ENCODE measurements at regions of chr10 and their contacts with region 1.

Region 1: GRCh38 chr10:11493646-11494045 is 117.8 kb downstream of the USP6NL start:
- DNase-seq: no peak
- ATAC-seq: no peak
- H3K4me3 ChIP-seq: no peak overlapping the region
- H3K27ac ChIP-seq: no peak overlapping the region
- H3K4me1 ChIP-seq: no peaks in the 10 kb centered on the region
- CTCF ChIP-seq: no peak
- EP300 ChIP-seq: no peak
- POLR2A ChIP-seq: no peak
- RAD21 ChIP-seq: no peak

Region 2: GRCh38 chr10:11483201-11484148 is 10.2 kb before region 1 on chr10:
- CTCF ChIA-PET with region 1: interaction called, 15 read pairs
- POLR2A ChIA-PET with region 1: no interaction called
- DNase-seq: no peak
- ATAC-seq: no peak
- H3K4me3 ChIP-seq: no peak overlapping the region
- H3K27ac ChIP-seq: no peak overlapping the region
- H3K4me1 ChIP-seq: no peaks in the 10 kb centered on the region
- CTCF ChIP-seq: no peak
- EP300 ChIP-seq: no peak
- POLR2A ChIP-seq: no peak
- RAD21 ChIP-seq: no peak

Region 3: DNA sequence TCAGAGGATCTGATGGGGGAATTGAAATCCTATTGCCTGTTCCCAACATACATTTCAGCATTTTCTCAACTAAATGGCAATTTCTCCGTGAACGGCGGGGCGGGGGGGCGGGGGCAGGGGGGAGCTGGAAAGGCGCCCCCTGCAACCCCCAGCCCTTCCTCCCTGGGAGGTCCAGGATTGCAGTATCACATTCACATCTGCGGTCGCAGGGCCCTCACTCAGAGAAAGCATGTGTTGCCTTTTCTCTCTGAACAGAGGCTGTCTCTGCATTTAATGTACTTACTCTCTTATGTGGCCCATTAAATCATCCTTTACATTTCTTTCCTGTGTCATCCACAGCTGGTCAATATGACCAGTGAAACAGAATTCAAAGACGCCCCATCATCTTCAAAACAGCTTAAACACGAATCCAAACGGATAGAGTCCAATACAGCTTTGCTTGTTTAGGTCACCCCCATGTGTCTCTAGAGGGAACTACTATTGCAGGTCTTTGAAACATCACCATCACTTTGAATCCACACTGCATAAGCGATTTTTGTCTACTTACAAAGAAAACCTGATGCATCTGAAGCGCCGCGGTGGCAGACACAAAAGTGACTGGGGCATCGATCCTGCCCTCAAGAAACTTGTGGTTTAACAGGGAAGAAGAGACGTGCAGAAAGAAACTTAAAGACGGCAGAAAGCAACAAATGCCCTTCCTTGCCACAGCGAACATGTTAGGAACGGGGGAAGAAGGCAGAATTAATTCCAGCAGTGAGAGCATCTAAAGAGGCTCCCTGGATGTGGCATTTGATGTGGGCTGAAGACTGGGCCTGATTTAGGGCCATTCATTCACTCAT is 231.5 kb after region 1 on chr10:
- CTCF ChIA-PET with region 1: interaction called, 12 read pairs
- POLR2A ChIA-PET with region 1: no interaction called
- DNase-seq: peak; percentile 71 to 72
- ATAC-seq: peak; percentile 95 to 97
- H3K4me3 ChIP-seq: no peak overlapping the region
- H3K27ac ChIP-seq: no peak overlapping the region
- H3K4me1 ChIP-seq: no peaks in the 10 kb centered on the region
- CTCF ChIP-seq: peak; percentile 67
- EP300 ChIP-seq: no peak
- POLR2A ChIP-seq: no peak
- RAD21 ChIP-seq: peak; percentile 85 to 93

Measured in A549 (cell line).